ENCODE measurements at regions of chr3 and their contacts with region 1.

Region 1: DNA sequence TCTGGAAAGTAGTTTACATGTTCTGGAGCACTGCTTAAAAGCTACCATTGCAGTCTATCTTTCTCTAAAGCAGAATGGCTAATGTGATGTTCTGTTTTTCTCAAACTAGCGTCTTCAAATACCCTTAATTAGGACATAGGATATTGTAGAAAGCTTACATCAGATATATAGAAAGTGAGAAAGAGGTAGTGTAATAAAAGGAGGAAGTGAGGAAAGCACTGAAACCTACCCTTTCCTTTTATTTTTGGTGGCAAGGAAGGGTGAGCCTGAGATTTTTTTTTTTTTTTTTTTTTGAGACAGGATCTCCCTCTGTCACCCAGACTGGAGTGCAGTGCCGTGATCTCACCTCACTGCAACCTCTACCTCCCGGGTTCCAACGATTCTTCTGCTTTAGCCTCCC is 9.4 kb downstream of the SENP2 start:
- DNase-seq: peak; percentile 55
- H3K4me3 ChIP-seq: no peak overlapping the region
- H3K27ac ChIP-seq: peak overlapping the region; percentile 44
- H3K4me1 ChIP-seq: peaks cover 16% of the 10 kb centered on the region
- CTCF ChIP-seq: no peak

Region 2: DNA sequence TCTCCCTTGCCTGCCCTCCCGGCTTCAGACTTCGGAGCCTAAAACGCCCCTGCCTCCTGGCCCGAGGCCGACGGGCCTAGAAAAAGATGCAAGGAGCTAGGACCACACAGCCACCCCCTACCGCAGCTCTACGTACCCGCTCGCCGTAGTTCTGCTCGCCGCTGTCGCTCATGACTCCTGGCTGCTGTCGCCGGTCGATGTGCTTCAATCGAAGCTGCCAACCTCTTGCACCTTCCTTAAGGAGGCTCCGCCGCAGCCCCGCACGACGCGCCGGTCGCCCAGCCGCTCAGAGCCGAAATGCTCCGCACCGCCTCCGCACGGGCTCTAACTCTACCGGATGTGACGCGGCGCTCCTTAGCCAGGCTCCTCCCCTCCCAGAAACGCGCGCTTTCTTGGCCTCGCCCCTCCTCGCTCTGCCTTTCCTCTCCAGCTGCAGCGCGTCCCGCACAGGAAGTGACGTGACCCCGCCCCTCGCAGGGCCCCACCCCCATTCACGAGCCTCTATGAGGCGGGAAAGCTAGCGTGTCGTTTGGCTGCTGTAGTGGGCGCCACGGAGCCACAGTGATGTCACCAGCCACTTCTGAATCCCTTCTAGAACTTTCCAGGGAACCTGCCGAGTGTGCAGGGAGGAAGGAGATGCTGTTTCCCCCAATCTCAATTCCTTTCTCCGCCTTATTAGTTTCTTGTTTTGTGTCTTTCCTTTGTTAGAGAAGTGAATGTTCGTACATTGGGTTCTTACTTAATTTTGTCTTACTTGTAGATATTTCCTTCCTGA is 342.4 kb after region 1 on chr3 and contains the start of gene TRA2B:
- CTCF ChIA-PET with region 1: no interaction called
- POLR2A ChIA-PET with region 1: no interaction called
- intact Hi-C with region 1: loop called (anchors 10 kb)
- DNase-seq: peak; percentile 98
- H3K4me3 ChIP-seq: peak within 1 kb of the TSS; percentile 92
- H3K27ac ChIP-seq: peak within 1 kb of the TSS; percentile 88
- H3K4me1 ChIP-seq: peaks cover 22% of the 10 kb centered on the region
- CTCF ChIP-seq: peak; percentile 62
- total RNA-seq, gene TRA2B: 349 and 420 TPM in 2 replicates

Measured in OCI-LY7 (cell line).